PC-3 (cell line): ENCODE measurements at regions of chr14 and their contacts with region 1.

Region 1: GRCh38 chr14:23910101-23910875 is 43.3 kb upstream of the DHRS4 start:
- DNase-seq: peak; percentile 79
- ATAC-seq: peak; percentile 86
- H3K4me3 ChIP-seq: no peak overlapping the region
- H3K27ac ChIP-seq: no peak overlapping the region
- H3K4me1 ChIP-seq: no peaks in the 10 kb centered on the region
- H3K27me3 ChIP-seq: peaks cover 12% of the 10 kb centered on the region
- CTCF ChIP-seq: peak; percentile 80

Region 2: GRCh38 chr14:23588884-23589598 is 321.2 kb before region 1 on chr14:
- CTCF ChIA-PET with region 1: interaction called, 21 read pairs
- POLR2A ChIA-PET with region 1: no interaction called
- intact Hi-C with region 1: loop called (anchors 5 kb)
- DNase-seq: peak; percentile 87
- ATAC-seq: peak; percentile 95
- H3K4me3 ChIP-seq: no peak overlapping the region
- H3K27ac ChIP-seq: no peak overlapping the region
- H3K4me1 ChIP-seq: no peaks in the 10 kb centered on the region
- H3K27me3 ChIP-seq: no peaks in the 10 kb centered on the region; the same call in 1 of the 2 replicates
- CTCF ChIP-seq: peak; percentile 85

Region 3: GRCh38 chr14:23631702-23632460 is 278.4 kb before region 1 on chr14:
- CTCF ChIA-PET with region 1: interaction called, 10 read pairs
- POLR2A ChIA-PET with region 1: interaction called, 3 read pairs
- intact Hi-C with region 1: loop called (anchors 1 kb)
- DNase-seq: peak; percentile 71
- ATAC-seq: peak; percentile 75
- H3K4me3 ChIP-seq: no peak overlapping the region
- H3K27ac ChIP-seq: no peak overlapping the region
- H3K4me1 ChIP-seq: no peaks in the 10 kb centered on the region
- H3K27me3 ChIP-seq: no peaks in the 10 kb centered on the region
- CTCF ChIP-seq: peak; percentile 96

Region 4: GRCh38 chr14:23665375-23666192 is 244.7 kb before region 1 on chr14:
- CTCF ChIA-PET with region 1: interaction called, 19 read pairs
- POLR2A ChIA-PET with region 1: no interaction called
- intact Hi-C with region 1: loop called (anchors 1 kb)
- DNase-seq: peak; percentile 58
- ATAC-seq: peak; percentile 61
- H3K4me3 ChIP-seq: no peak overlapping the region
- H3K27ac ChIP-seq: no peak overlapping the region
- H3K4me1 ChIP-seq: no peaks in the 10 kb centered on the region
- H3K27me3 ChIP-seq: peaks cover 54% of the 10 kb centered on the region
- CTCF ChIP-seq: peak; percentile 64

Region 5: DNA sequence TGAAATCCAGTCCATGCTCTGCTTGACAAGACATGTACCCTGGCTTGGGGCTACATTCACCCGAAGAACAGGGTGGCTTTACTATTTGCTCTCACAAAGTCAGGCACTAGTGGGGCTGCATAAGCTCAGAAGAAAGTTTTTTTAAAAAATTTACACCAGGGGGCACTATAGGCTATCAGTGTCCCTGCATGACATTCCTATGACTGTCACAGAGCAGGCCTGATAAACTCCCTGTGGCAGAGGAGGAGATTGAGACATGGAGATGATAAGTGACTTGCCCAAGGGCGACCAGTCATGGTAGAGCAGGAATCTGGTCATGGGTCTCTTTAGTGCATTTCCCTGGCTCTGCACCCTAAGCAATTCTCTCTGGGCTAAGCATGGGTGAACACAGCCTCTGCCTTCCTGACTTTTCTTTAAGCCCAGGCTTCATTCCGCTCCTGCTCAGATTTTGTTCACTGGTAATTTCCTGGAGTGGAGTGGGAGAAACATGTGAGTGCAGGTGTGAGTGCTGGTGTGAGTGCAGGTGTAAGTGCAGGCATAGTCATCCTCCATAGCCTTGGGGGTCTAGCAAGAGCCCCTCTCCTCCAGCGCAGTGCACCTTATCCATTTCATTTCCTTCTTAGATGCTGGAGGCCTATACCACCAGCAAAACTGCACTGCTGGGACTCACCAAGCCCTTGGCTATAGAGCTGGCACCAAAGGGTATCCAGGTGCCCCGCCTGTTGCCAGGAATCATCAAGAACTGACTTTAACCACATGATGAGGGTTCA is 182.5 kb before region 1 on chr14:
- CTCF ChIA-PET with region 1: interaction called, 29 read pairs
- POLR2A ChIA-PET with region 1: no interaction called
- intact Hi-C with region 1: loop called (anchors 1 kb)
- DNase-seq: peak; percentile 77
- ATAC-seq: peak; percentile 87
- H3K4me3 ChIP-seq: no peak overlapping the region
- H3K27ac ChIP-seq: no peak overlapping the region
- H3K4me1 ChIP-seq: no peaks in the 10 kb centered on the region; the same call in 1 of the 2 replicates
- H3K27me3 ChIP-seq: 0 out of 2 replicates have a peak, but pooled peaks cover 7% of the 10 kb centered on the region
- CTCF ChIP-seq: peak; percentile 72